H1 (cell line): ENCODE measurements at regions of chr11 and their contacts with region 1.

Region 1: DNA sequence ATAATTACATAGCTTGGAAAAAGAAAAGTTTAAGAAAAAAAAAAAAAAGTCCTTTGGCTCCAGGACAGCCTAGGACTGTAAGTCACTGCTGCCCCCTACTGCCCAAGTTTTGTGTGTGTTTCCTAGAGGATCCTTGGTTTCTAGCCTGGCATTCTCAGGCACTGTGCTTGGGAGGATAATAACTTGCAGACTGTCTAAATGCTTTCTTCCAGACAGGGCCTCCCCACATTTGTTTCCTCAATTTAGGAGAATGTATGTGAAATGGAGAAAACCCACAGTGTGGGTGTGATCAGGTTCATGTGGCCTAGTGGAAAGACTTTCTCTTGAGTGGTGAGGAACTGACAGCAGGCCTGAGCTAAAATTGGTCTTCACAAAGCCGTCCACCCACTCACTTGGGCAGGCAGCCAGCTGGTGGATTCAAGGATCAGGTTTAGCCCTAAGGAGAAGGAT is 191.0 kb downstream of the NAV2 start:
- DNase-seq: peak; percentile 23 to 90
- H3K4me3 ChIP-seq: no peak overlapping the region
- H3K27ac ChIP-seq: no peak overlapping the region
- H3K4me1 ChIP-seq: peaks cover 0 to 8% (median 4%) of the 10 kb centered on the region in 4 experiments; a peak in 4 of 7 replicates
- H3K27me3 ChIP-seq: no peaks in the 10 kb centered on the region
- CTCF ChIP-seq: peak; percentile 54 to 87 (median 79)
- EP300 ChIP-seq: no peak
- POLR2A ChIP-seq: no peak
- RAD21 ChIP-seq: peak; percentile 93 to 95

Region 2: DNA sequence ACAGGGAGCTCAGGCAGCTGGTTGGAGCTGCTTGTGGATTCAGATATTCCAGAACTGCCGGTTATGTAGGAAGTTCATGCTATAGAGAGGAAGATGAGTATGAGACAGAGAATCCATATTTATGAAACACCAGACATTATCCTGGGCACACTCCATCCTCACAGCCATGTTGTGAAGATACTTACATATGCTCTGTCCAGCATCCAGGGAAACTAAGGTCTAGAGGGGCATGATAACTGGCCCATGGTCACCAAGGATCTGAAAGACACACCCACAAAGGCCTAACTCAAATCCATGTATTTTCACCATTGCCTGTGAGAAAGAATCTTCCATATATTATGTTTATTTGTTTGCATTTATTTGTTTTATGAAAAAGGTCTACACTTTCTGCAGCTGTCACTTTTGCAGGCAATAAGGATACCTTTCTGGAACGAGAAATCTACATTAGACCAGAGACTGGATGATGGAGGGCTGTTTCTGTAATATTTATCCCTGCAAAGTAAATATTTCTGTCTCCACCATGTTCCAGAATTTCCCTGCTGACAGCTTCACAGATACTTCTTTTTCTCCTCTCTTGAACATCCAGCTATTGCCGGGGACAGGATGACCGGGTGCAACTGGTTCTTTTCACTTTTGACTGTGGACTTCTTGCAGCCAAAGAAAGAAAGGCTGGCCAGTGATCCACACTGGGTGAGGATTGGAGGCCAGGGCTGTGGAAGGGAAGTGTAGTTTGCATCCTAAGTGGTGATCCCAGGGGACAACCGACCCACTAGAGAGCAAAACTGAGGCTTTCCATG is 336.9 kb before region 1 on chr11:
- CTCF ChIA-PET with region 1: interaction called, 53 read pairs
- POLR2A ChIA-PET with region 1: no interaction called
- DNase-seq: no peak
- H3K4me3 ChIP-seq: no peak overlapping the region
- H3K27ac ChIP-seq: no peak overlapping the region
- H3K4me1 ChIP-seq: no peaks in the 10 kb centered on the region
- H3K27me3 ChIP-seq: no peaks in the 10 kb centered on the region; a peak in 1 of 7 replicates
- CTCF ChIP-seq: no peak
- EP300 ChIP-seq: no peak
- POLR2A ChIP-seq: no peak
- RAD21 ChIP-seq: no peak

Region 3: GRCh38 chr11:19772480-19772879 is 131.2 kb before region 1 on chr11:
- CTCF ChIA-PET with region 1: interaction called, 15 read pairs
- POLR2A ChIA-PET with region 1: no interaction called
- DNase-seq: peak; percentile 66 to 89
- H3K4me3 ChIP-seq: peak overlapping the region in 1 of 4 experiments; percentile 27; a peak in 1 of 8 replicates
- H3K27ac ChIP-seq: 0 out of 2 replicates have a peak overlapping the region, but pooled peaks have one; percentile 6
- H3K4me1 ChIP-seq: peaks cover 18 to 36% (median 26%) of the 10 kb centered on the region in 4 experiments
- H3K27me3 ChIP-seq: no peaks in the 10 kb centered on the region
- CTCF ChIP-seq: no peak
- EP300 ChIP-seq: peak in 1 of 2 experiments; percentile 76; a peak in 1 of 3 replicates
- POLR2A ChIP-seq: no peak; a peak in 1 of 3 replicates
- RAD21 ChIP-seq: no peak; a peak in 1 of 4 replicates

Region 4: DNA sequence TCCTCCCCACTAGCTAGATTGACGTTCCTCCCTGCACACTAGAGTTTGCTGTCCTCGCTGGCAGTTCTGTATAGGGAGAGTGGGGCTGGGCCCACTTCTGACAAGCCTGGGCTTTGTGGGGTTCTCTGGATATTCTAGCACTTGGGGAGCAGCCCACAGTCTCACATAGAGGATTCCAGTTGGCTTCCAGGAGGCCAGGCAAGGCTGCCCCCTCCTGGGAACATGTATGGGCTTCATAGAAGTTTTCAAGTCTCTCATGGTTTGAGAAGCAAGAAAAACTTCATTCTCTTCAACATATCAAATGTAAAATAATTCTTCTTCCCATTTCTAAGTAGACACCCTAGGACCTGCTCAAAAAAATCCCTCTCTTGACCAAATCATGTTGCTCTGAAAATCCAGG is 103.5 kb before region 1 on chr11:
- CTCF ChIA-PET with region 1: interaction called, 35 read pairs
- POLR2A ChIA-PET with region 1: no interaction called
- DNase-seq: no peak
- H3K4me3 ChIP-seq: no peak overlapping the region
- H3K27ac ChIP-seq: no peak overlapping the region
- H3K4me1 ChIP-seq: peaks cover 8 to 49% (median 26%) of the 10 kb centered on the region in 4 experiments; a peak in 6 of 7 replicates
- H3K27me3 ChIP-seq: no peaks in the 10 kb centered on the region
- CTCF ChIP-seq: peak; percentile 35 to 54 (median 37)
- EP300 ChIP-seq: no peak
- POLR2A ChIP-seq: no peak
- RAD21 ChIP-seq: peak; percentile 64 to 75

Region 5: DNA sequence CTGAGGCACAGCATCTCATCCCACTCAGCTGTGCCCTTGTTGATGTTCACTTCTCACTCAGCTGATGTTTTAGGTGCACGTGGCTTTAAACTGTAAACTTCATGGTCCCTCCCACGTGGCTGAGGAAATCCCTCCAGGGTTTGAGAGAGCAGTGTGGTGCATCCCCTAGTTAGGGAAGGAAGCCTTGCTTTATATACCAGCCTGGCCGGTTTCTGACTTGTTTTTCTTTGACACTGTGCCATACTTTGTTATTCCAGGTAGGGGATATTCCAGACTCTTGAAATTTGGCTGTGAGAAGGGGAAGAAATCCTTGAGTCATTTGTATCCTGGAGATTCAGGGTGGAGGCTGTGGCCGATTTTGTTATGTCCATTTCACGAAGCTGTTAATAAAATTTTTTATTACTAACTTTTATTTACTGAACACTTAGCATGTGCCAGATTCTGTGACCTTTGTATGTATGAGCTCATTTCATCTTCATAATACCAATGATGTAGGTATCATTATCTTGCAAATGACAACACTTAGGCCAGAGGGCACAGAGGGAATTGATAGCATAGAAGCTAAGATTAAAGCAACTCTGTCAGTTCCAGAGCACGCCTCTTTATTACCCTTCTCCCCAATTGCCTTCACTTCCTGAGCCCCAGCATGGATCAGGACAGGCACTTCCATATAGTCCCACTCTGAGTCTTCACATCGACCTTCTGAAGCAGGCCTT is 74.4 kb before region 1 on chr11:
- CTCF ChIA-PET with region 1: interaction called, 28 read pairs
- POLR2A ChIA-PET with region 1: no interaction called
- DNase-seq: no peak
- H3K4me3 ChIP-seq: no peak overlapping the region
- H3K27ac ChIP-seq: 0 out of 2 replicates have a peak overlapping the region, but pooled peaks have one; percentile 17
- H3K4me1 ChIP-seq: peaks cover 2 to 35% (median 30%) of the 10 kb centered on the region in 4 experiments; a peak in 6 of 7 replicates
- H3K27me3 ChIP-seq: no peaks in the 10 kb centered on the region
- CTCF ChIP-seq: no peak
- EP300 ChIP-seq: no peak
- POLR2A ChIP-seq: no peak
- RAD21 ChIP-seq: no peak

Region 6: GRCh38 chr11:19938169-19938856 is 34.7 kb after region 1 on chr11:
- CTCF ChIA-PET with region 1: interaction called, 24 read pairs
- POLR2A ChIA-PET with region 1: no interaction called
- DNase-seq: peak in 1 of 2 experiments; percentile 79
- H3K4me3 ChIP-seq: no peak overlapping the region
- H3K27ac ChIP-seq: no peak overlapping the region
- H3K4me1 ChIP-seq: peaks cover 2 to 11% (median 4%) of the 10 kb centered on the region in 4 experiments; a peak in 4 of 7 replicates
- H3K27me3 ChIP-seq: no peaks in the 10 kb centered on the region
- CTCF ChIP-seq: peak; percentile 65 to 94 (median 90)
- EP300 ChIP-seq: no peak
- POLR2A ChIP-seq: no peak
- RAD21 ChIP-seq: peak; percentile 68 to 69

Region 7: DNA sequence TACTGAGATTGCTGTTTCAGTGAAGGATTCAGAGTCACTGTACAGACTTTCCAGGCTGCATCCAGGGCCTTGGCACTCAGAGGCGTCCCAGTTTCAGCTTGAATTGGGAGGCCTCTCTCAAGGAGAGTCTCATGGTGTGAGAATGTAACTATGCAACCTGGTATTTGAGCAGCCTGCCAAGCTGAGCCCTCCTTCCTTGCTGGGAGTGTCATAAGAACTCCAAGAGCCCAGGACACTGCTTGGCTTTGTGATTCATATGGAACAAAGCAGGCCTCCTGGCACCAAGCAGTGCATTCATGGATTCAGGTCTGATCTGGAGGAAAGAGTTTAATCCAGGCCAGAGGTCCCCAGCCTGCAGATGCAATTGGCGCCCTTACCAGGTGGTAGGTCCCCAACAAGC is 85.0 kb after region 1 on chr11:
- CTCF ChIA-PET with region 1: no interaction called
- POLR2A ChIA-PET with region 1: no interaction called
- DNase-seq: peak; percentile 15 to 47
- H3K4me3 ChIP-seq: no peak overlapping the region
- H3K27ac ChIP-seq: no peak overlapping the region
- H3K4me1 ChIP-seq: peaks cover 0 to 17% (median 8%) of the 10 kb centered on the region in 4 experiments; a peak in 6 of 7 replicates
- H3K27me3 ChIP-seq: no peaks in the 10 kb centered on the region
- CTCF ChIP-seq: no peak
- EP300 ChIP-seq: no peak; a peak in 1 of 3 replicates
- POLR2A ChIP-seq: no peak
- RAD21 ChIP-seq: no peak